ENCODE measurements at regions of chr12 and their contacts with region 1.

Region 1: GRCh38 chr12:42237052-42237852 is 796 bp downstream of the YAF2 start:
- DNase-seq: peak; percentile 33 to 89 (median 69)
- ATAC-seq: peak; percentile 69
- H3K4me3 ChIP-seq: peak overlapping the region; percentile 63 to 66
- H3K4me3 Mint-ChIP-seq: peak overlapping the region; percentile 92
- H3K27ac ChIP-seq: peak overlapping the region; percentile 70 to 79
- H3K27ac Mint-ChIP-seq: peak overlapping the region; percentile 93
- H3K4me1 ChIP-seq: peaks cover 51% of the 10 kb centered on the region
- H3K4me1 Mint-ChIP-seq: peaks cover 45% of the 10 kb centered on the region
- H3K27me3 ChIP-seq: no peaks in the 10 kb centered on the region
- H3K27me3 Mint-ChIP-seq: no peaks in the 10 kb centered on the region
- CTCF ChIP-seq: peak; percentile 49

Region 2: DNA sequence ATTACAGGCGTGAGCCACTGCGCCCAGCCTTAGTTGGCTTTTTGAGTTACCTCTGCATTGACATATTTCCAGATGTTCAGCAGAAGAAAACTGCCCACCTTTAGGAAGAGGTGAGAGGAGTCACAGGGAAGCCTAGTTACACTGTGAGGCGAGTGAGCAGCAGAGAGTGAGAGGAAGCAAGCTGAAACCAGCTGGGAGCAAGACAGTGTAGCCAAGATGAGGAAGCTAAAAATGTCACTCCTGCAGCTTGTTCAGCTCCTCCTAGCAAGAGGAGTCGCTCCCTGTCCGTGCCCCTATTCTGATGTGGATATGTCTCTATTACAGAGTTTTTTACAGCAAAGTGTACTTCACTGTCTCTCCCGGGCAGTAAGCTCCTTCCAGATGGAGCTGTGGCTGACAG is 220.2 kb before region 1 on chr12:
- CTCF ChIA-PET with region 1: no interaction called
- POLR2A ChIA-PET with region 1: no interaction called
- intact Hi-C with region 1: no loop called
- DNase-seq: no peak
- ATAC-seq: no peak
- H3K4me3 ChIP-seq: no peak overlapping the region
- H3K4me3 Mint-ChIP-seq: no peak overlapping the region
- H3K27ac ChIP-seq: no peak overlapping the region
- H3K27ac Mint-ChIP-seq: no peak overlapping the region
- H3K4me1 ChIP-seq: no peaks in the 10 kb centered on the region
- H3K4me1 Mint-ChIP-seq: no peaks in the 10 kb centered on the region
- H3K27me3 ChIP-seq: no peaks in the 10 kb centered on the region
- H3K27me3 Mint-ChIP-seq: peaks cover 14% of the 10 kb centered on the region
- CTCF ChIP-seq: no peak

Region 3: DNA sequence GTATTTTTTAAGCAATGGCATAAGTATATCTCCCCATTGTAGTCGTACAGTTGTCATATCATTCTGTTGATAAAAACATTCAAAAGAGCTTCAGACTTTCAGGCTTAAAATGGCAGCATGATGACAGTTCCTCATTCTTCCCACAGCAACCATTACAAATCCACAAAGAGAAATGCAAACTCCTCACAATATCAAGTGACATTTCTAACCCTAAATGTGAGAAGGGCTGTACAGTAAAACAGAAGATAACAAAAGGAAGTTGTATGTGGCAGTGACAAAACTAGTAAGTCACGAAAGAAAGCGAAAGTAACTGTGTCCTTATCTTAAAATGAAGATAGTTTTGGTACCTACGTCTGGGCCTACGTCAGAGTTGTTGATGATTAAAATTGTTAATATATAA is 139.3 kb before region 1 on chr12:
- CTCF ChIA-PET with region 1: no interaction called
- POLR2A ChIA-PET with region 1: no interaction called
- intact Hi-C with region 1: loop called (anchors 2 to 5 kb)
- DNase-seq: peak in 2 of 9 experiments; percentile 69 to 86
- ATAC-seq: peak; percentile 86
- H3K4me3 ChIP-seq: peak overlapping the region; percentile 39 to 53
- H3K4me3 Mint-ChIP-seq: peak overlapping the region; percentile 92
- H3K27ac ChIP-seq: peak overlapping the region; percentile 89
- H3K27ac Mint-ChIP-seq: peak overlapping the region; percentile 99
- H3K4me1 ChIP-seq: peaks cover 35% of the 10 kb centered on the region
- H3K4me1 Mint-ChIP-seq: peaks cover 50% of the 10 kb centered on the region
- H3K27me3 ChIP-seq: no peaks in the 10 kb centered on the region
- H3K27me3 Mint-ChIP-seq: no peaks in the 10 kb centered on the region
- CTCF ChIP-seq: no peak

Region 4: DNA sequence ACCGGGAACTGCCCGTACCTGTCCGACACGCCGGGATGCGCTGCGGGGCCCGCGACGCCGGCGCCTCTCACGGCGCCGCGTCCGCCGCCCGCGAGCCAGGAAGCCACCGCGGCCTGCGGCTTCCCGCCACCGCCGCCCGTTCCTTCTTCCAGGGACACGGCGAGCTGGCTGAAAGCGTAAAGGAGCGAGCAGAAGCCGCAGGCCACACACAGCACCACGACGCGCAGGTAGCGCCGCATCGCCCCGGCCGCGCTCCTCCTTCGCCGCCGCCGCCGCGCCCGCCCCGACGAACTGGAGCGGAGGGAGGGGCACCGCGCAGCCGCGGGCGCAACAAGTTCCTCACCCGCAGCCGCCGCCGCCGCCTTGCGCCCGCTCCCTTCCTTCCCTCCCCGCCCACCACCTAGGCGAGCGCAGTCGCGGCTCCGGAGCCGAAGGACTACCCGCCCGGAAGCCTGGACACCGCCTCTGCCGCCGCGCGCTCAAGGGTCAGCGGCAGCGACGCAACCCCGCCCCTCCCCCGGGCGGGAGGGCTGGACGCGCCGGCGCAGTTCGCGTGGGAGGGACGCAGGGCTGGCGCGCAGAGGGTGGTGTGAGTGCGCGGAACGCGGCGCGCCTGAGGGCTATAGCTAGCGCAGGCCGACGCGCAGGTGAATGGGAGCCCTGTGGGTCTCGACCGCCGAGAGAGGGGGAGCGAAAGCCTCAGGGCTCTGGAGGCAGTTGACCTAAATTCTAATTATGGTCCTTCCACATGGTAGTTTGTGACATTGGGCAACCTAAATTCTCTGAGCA is 92.7 kb before region 1 on chr12 and contains the start of gene GXYLT1:
- CTCF ChIA-PET with region 1: interaction called, 3 read pairs
- POLR2A ChIA-PET with region 1: interaction called, 4 read pairs
- intact Hi-C with region 1: loop called (anchors 1 to 2 kb)
- DNase-seq: peak; percentile 59 to 87 (median 77)
- ATAC-seq: peak; percentile 87
- H3K4me3 ChIP-seq: peak within 1 kb of the TSS; percentile 79 to 80
- H3K4me3 Mint-ChIP-seq: peak within 1 kb of the TSS; percentile 91
- H3K27ac ChIP-seq: peak within 1 kb of the TSS; percentile 49 to 56
- H3K27ac Mint-ChIP-seq: peak within 1 kb of the TSS; percentile 87
- H3K4me1 ChIP-seq: peaks cover 13% of the 10 kb centered on the region
- H3K4me1 Mint-ChIP-seq: peaks cover 46% of the 10 kb centered on the region
- H3K27me3 ChIP-seq: no peaks in the 10 kb centered on the region
- H3K27me3 Mint-ChIP-seq: no peaks in the 10 kb centered on the region
- CTCF ChIP-seq: no peak
- total RNA-seq, gene GXYLT1: 8.5 to 9.2 TPM

Region 5: GRCh38 chr12:42196723-42197603 is 40.3 kb before region 1 on chr12:
- CTCF ChIA-PET with region 1: no interaction called
- POLR2A ChIA-PET with region 1: no interaction called
- intact Hi-C with region 1: loop called in 1 of 2 experiments (anchors 5 kb)
- DNase-seq: no peak
- ATAC-seq: no peak
- H3K4me3 ChIP-seq: no peak overlapping the region
- H3K4me3 Mint-ChIP-seq: no peak overlapping the region
- H3K27ac ChIP-seq: no peak overlapping the region
- H3K27ac Mint-ChIP-seq: no peak overlapping the region
- H3K4me1 ChIP-seq: no peaks in the 10 kb centered on the region
- H3K4me1 Mint-ChIP-seq: peaks cover 14% of the 10 kb centered on the region
- H3K27me3 ChIP-seq: no peaks in the 10 kb centered on the region
- H3K27me3 Mint-ChIP-seq: no peaks in the 10 kb centered on the region
- CTCF ChIP-seq: no peak

Region 6: DNA sequence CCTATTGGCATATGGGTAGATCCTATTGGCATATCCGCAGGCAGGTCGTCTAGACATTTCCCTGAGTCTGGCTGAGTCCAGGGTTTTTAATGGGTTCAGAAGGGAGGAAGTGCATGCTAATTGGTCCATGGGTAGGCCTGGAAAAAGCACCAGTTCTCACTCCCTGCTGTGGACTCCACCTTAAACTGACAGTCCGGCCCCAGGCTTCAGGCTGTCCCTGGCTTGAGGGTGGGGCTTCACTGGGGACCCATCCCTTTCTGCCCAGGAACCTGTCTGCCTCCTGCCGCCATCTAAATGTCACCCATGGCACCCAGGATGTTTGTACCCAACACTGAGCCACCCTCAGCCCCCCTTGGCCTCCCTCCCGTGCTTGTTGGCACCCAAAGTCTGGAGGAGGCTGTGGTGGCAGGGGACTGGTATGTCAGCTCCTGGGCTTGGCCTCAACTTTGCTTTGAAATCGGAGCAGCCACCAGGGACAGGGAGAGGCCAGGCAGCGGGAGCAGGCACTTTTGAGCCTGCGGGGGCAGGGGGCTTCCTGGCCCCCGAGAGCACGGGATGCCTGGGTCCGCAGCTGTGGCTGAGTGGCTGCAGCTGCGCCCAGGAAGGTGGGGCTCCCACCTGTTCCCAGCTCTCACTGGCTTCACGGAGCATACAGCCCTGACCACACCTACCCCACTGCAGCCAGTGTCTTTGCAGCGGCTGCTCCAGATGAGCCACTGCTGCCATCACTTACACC is 30.4 kb after region 1 on chr12:
- CTCF ChIA-PET with region 1: no interaction called
- POLR2A ChIA-PET with region 1: no interaction called
- intact Hi-C with region 1: no loop called
- DNase-seq: no peak
- ATAC-seq: no peak
- H3K4me3 ChIP-seq: no peak overlapping the region
- H3K4me3 Mint-ChIP-seq: no peak overlapping the region
- H3K27ac ChIP-seq: no peak overlapping the region
- H3K27ac Mint-ChIP-seq: no peak overlapping the region
- H3K4me1 ChIP-seq: no peaks in the 10 kb centered on the region
- H3K4me1 Mint-ChIP-seq: peaks cover 2% of the 10 kb centered on the region
- H3K27me3 ChIP-seq: no peaks in the 10 kb centered on the region
- H3K27me3 Mint-ChIP-seq: peaks cover 5% of the 10 kb centered on the region
- CTCF ChIP-seq: no peak

Region 7: GRCh38 chr12:42325653-42326474 is 88.6 kb after region 1 on chr12 and contains the starts of genes PPHLN1 and ZCRB1:
- CTCF ChIA-PET with region 1: no interaction called
- POLR2A ChIA-PET with region 1: interaction called, 4 read pairs
- intact Hi-C with region 1: loop called (anchors 1 kb)
- DNase-seq: peak; percentile 54 to 89 (median 78)
- ATAC-seq: peak; percentile 89
- H3K4me3 ChIP-seq: peak within 1 kb of the TSS; percentile 68 to 95
- H3K4me3 Mint-ChIP-seq: peak within 1 kb of the TSS; percentile 98
- H3K27ac ChIP-seq: peak within 1 kb of the TSS; percentile 79 to 91
- H3K27ac Mint-ChIP-seq: peak within 1 kb of the TSS; percentile 98
- H3K4me1 ChIP-seq: peaks cover 24% of the 10 kb centered on the region
- H3K4me1 Mint-ChIP-seq: peaks cover 54% of the 10 kb centered on the region
- H3K27me3 ChIP-seq: no peaks in the 10 kb centered on the region
- H3K27me3 Mint-ChIP-seq: no peaks in the 10 kb centered on the region
- CTCF ChIP-seq: no peak
- total RNA-seq, gene PPHLN1: 104 to 108 TPM
- total RNA-seq, gene ZCRB1: 35.7 to 39.4 TPM

Region 8: GRCh38 chr12:43835656-43836474 is 1598.6 kb after region 1 on chr12 and contains the start of gene TMEM117:
- CTCF ChIA-PET with region 1: no interaction called
- POLR2A ChIA-PET with region 1: no interaction called
- intact Hi-C with region 1: loop called in 1 of 2 experiments (anchors 10 kb)
- DNase-seq: peak; percentile 21 to 82 (median 65)
- ATAC-seq: peak; percentile 69
- H3K4me3 ChIP-seq: peak within 1 kb of the TSS; percentile 56 to 63
- H3K4me3 Mint-ChIP-seq: peak within 1 kb of the TSS; percentile 92
- H3K27ac ChIP-seq: peak within 1 kb of the TSS; percentile 64 to 78
- H3K27ac Mint-ChIP-seq: peak within 1 kb of the TSS; percentile 95
- H3K4me1 ChIP-seq: peaks cover 35% of the 10 kb centered on the region
- H3K4me1 Mint-ChIP-seq: peaks cover 52% of the 10 kb centered on the region
- H3K27me3 ChIP-seq: no peaks in the 10 kb centered on the region
- H3K27me3 Mint-ChIP-seq: no peaks in the 10 kb centered on the region
- CTCF ChIP-seq: no peak
- total RNA-seq, gene TMEM117: 3.5 to 4.0 TPM